Ovary (tissue), 10 donors: ENCODE measurements at regions of chr6 and their contacts with region 1.

Region 1: DNA sequence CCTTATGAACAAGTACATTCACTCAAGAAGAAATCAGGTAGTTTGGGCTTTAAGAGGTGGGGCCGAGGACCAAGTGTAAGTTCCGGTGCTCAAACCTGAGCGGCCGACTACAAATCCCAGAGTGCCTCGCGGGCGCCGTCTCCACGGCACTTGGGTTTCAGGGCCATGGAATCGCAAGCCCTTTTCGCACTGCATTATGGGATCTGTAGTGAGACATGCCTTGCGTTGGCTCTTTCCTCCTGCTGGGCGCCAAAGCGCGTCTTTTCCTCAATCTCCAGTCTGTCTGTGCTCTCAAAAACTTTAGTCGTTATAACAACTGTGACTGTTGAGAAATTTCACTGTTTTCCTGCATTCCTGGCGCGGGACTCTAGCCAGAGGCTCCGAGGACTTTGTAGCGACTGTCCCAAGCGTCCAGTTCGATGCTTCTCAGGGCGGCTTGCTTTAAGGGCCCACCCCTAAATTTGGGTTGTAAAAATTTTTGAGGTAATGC is 433 bp upstream of the FBXO9 start:
- DNase-seq: peak; percentile 94 to 97 (median 95)
- H3K4me3 ChIP-seq: peak overlapping the region; percentile 87
- H3K27ac ChIP-seq: peak overlapping the region; percentile 92 to 98
- H3K4me1 ChIP-seq: peaks cover 3% of the 10 kb centered on the region
- H3K27me3 ChIP-seq: no peaks in the 10 kb centered on the region
- CTCF ChIP-seq: peak in 1 of 3 donors; percentile 17
- EP300 ChIP-seq: no peak
- POLR2A ChIP-seq: peak; percentile 56

Region 2: DNA sequence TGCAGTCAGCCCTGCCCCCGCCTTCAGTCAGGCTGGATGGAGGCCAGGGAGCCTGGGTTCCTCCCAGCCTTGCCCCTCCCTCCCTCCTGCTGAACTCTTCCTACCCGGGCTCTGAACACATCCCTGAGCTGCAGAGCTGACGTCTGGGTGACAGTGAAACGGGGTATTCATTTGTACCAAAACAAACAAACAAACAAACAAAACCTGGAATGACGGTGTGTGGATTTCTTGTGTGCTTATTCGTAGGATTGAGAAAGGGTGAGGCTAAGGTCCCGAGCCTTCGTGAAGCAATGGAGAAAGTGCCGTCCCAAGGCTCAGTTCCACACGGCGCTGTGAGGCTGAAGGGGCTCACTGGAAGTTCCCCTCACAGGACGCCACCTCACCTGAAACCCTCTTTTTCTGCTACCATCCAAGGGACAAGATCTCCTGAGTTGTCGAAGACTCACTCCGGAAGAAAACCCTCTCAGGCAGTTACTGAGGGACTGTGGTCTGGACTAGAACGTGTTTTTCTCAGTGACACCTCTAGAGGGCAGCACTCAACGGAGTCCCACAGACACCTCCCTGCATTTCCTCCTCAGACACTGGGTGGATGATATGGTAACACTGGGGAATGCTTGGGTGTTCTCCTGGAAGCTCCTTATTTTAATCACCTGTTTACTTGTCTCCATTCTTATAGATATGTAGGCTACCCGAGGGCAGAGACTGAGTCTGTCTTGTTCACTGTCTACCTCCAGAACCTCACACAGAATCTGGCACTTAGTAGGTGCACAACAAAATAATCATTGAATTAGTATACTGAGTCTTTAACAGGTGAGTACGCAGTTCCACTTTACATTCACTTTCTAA is 182.6 kb before region 1 on chr6:
- intact Hi-C with region 1: loop called in 1 of 4 experiments (anchors 2 kb)
- DNase-seq: peak; percentile 54 to 74 (median 65)
- H3K4me3 ChIP-seq: peak overlapping the region; percentile 33
- H3K27ac ChIP-seq: peak overlapping the region in 1 of 2 donors; percentile 36
- H3K4me1 ChIP-seq: no peaks in the 10 kb centered on the region
- H3K27me3 ChIP-seq: no peaks in the 10 kb centered on the region
- CTCF ChIP-seq: peak; percentile 49 to 59 (median 55)
- EP300 ChIP-seq: no peak
- POLR2A ChIP-seq: no peak

Region 3: DNA sequence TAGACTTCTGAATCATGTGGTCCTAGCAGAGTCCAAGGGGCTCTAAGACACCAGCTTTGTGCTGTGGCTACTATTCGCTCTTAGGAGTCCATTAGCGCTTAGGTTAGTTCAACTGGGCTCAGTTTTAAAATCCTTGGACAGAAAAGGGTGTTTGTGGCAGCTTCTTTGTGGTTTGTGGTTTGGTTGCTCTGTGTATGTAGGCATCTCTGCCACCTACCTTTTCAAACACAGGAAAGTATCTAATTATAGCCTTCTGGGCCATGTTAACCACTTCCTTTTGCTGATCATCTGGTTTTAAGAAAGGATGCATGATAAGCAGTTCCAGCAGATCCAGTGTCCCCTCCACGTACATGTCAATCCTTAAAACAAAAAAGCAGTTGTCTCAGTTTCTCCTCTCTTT is 80.5 kb before region 1 on chr6:
- intact Hi-C with region 1: no loop called
- DNase-seq: no peak
- H3K4me3 ChIP-seq: no peak overlapping the region
- H3K27ac ChIP-seq: no peak overlapping the region
- H3K4me1 ChIP-seq: no peaks in the 10 kb centered on the region
- H3K27me3 ChIP-seq: no peaks in the 10 kb centered on the region
- CTCF ChIP-seq: no peak
- EP300 ChIP-seq: no peak
- POLR2A ChIP-seq: no peak

Region 4: DNA sequence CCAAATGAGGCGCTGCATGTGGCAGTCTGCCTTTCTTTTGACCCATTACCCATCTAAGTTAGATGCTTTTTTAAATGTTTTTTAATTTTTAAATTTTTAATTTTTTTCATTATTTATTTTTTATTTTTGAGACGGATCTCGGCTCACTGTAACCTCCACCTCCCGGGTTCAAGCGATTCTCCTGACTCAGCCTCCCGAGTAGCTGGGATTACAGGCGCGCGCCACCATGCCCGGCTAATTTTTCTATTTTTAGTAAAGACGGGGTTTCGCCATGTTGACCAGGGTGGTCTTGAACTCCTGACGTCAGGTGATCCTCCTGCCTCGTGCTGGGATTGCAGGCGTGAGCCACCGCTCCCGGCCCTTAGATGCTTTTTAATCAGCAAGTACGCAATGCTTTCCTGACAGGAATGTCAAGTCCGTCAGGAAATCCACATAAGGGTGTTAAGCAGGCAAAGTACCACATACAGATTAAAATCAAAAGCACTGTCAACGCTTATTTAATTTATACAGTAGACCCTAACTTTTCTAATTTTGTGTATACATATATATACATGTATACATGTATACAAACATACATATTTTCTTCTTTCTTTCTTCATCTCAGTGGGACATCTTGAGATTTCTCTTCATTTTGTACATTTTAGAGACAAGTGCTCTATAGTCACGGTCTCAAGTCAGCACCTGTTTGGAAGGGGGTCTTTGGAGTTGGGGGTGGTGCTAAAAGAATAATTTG is 68.7 kb before region 1 on chr6:
- intact Hi-C with region 1: loop called in 3 of 4 experiments (anchors 1 to 5 kb)
- DNase-seq: peak; percentile 43 to 65 (median 54)
- H3K4me3 ChIP-seq: peak overlapping the region; percentile 33
- H3K27ac ChIP-seq: peak overlapping the region in 1 of 2 donors; percentile 89
- H3K4me1 ChIP-seq: peaks cover 3% of the 10 kb centered on the region
- H3K27me3 ChIP-seq: no peaks in the 10 kb centered on the region
- CTCF ChIP-seq: no peak
- EP300 ChIP-seq: no peak
- POLR2A ChIP-seq: no peak